Motor neuron (in vitro differentiated cells): ENCODE measurements at regions of chr1 and their contacts with region 1.

Region 1: DNA sequence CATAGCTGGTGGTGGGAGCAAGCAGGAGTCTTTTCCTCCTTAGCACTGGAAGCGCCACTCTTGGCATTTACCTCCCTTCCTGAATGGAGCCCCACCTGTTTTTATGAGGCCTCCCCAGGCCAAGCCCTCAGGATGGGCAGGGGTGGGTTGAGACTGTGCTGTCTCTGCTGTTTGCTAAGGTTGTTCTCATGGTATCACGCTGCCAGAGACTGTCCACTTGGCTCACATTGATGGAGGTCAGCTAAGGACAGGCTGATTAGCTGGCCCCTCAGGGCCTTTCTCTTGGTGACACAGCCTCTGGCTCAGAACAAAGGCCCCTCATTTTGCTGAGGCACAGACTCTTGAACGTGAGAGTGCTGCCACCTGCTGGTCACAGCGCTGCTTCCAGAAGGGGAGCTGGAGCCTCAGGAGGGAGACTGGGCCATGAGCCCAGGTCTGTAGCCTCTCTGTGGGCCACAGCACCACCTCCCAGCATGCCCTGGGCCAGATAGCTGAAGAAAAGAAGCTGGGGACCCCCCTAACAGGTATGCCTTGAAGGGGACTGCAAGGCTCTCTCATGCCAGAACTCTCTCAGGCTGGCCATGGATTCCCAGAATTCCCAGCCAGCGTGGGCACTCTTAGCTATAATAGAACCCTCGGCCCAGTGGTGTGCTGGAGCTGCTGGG is 85.6 kb downstream of the CD58 start:
- ATAC-seq: peak; percentile 89 to 99 (median 98)
- H3K4me3 ChIP-seq: no peak overlapping the region
- H3K27ac ChIP-seq: no peak overlapping the region
- H3K4me1 ChIP-seq: peaks cover 3 to 5% of the 10 kb centered on the region in 2 donors

Region 2: DNA sequence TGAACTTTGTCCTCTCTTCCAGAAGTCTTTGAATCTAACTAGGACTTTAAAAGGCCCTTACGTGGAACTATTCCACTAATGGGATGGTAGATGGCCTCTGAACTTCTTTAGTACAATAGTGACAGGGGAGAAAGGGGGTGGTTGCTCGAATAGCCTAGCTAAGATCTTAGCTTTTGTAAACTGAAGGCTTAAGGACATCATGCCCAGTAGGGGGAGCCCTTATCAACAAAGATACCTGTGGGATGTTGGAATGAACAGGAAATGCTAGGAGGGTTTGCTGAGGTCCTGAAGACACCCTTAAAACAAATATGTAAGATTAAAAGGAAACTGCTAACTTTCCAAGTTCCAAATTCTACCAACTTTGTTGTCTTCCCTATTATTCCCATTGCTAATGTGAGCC is 677.5 kb before region 1 on chr1:
- in situ Hi-C with region 1: loop called in 1 of 9 experiments (anchors 25 kb)
- ATAC-seq: peak in 7 of 8 experiments; percentile 51 to 92 (median 72)
- H3K4me3 ChIP-seq: no peak overlapping the region
- H3K27ac ChIP-seq: no peak overlapping the region
- H3K4me1 ChIP-seq: peaks cover 4 to 12% of the 10 kb centered on the region in 2 donors

Region 3: DNA sequence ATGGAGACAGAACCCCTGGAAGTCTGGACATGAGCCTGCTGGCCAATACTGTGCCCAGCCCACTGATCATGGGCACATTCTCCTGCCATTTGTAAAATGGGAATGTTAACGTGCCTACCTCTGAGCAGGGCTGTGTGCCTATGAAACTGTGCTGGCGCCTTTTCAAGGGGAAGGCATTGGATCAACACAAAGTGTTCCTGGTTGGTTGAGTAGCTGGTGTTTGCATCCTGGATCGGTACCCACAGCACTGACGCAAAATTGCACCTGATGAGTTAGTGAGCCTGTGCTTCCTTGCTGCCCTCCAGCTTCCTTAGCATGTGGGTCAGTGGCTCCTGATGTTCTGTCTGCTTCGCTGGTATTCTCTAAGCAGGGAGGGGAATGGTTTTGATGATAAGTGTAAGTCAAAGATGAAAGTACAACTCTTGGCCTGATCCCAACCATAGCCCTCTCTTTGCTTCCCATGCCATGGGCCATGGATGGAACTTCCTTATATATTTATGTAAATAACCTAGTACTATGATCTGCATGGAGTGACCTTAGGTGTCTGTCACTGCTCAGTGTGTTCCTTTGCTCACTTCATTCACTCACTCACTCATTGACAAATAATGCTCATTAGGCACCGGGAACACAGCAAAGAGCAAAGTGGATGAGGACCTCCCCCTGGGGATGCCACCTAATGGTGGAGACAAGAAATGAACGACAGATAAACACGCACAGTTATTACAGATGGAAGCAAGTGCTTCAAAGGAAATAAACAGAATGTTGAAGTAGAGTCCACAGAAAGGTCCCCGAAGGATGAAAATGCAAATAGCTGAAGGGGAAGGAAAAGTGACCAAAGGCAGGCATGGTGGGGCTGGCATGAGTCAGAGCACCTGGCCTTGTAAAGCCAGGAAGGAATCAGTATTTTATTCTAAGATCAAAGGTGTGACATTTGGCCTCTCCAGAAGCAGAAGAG is 351.2 kb before region 1 on chr1:
- in situ Hi-C with region 1: loop called in 7 of 9 experiments (anchors 10 to 25 kb)
- ATAC-seq: no peak
- H3K4me3 ChIP-seq: no peak overlapping the region
- H3K27ac ChIP-seq: no peak overlapping the region
- H3K4me1 ChIP-seq: no peaks in the 10 kb centered on the region

Region 4: GRCh38 chr1:116151739-116152576 is 333.2 kb before region 1 on chr1:
- in situ Hi-C with region 1: loop called in 3 of 9 experiments (anchors 25 kb)
- ATAC-seq: peak; percentile 96 to 100 (median 98)
- H3K4me3 ChIP-seq: peak overlapping the region; percentile 25 to 40 (median 30)
- H3K27ac ChIP-seq: no peak overlapping the region
- H3K4me1 ChIP-seq: peaks cover 0 to 7% of the 10 kb centered on the region in 2 donors

Region 5: DNA sequence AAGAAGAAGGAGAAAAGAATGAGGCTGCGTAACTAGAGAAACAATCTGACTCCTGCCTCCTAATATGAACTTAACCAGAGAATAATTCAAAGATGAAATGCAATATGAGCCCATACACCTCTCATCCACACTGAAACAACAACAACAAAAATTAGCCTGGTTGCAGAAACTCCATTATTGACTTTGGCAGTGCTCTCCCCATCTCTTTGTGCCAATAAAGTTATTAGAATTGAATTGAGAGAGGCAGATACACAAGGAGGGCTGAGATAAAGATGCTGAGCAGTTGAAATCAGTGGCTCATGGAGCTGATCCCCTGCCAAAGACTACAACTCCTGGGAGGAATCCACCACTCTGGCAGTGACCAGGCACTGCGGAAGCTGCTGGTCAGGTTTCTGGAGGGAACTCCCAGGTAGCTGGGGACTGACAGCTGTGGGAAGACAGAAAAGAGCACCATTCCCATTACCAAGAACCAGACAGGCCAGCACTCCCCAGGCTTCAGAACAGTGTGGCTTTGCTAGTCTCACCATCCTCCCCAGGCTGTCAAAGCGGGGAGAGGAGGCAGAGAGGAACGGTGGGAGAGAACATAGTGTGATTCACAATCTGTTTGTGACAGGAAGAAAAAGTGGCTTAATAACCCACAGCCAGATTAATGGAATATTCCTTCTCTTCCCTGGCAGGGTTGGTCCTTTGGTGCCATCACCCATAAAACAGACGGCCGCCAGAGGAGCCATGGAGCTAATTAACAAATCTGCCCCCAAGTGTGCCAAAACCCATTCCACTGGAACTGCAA is 282.1 kb before region 1 on chr1:
- in situ Hi-C with region 1: no loop called
- ATAC-seq: peak in 3 of 8 experiments; percentile 38 to 59 (median 55)
- H3K4me3 ChIP-seq: no peak overlapping the region
- H3K27ac ChIP-seq: no peak overlapping the region
- H3K4me1 ChIP-seq: no peaks in the 10 kb centered on the region

Region 6: GRCh38 chr1:116409751-116410191 is 75.4 kb before region 1 on chr1:
- in situ Hi-C with region 1: loop called in 1 of 9 experiments (anchors 10 kb)
- ATAC-seq: peak in 6 of 8 experiments; percentile 18 to 79 (median 32)
- H3K4me3 ChIP-seq: no peak overlapping the region
- H3K27ac ChIP-seq: no peak overlapping the region
- H3K4me1 ChIP-seq: peaks cover 0 to under 1% of the 10 kb centered on the region in 2 donors